Posterior vena cava (tissue), 2 donors: ENCODE measurements at regions of chr9 and their contacts with region 1.

Region 1: DNA sequence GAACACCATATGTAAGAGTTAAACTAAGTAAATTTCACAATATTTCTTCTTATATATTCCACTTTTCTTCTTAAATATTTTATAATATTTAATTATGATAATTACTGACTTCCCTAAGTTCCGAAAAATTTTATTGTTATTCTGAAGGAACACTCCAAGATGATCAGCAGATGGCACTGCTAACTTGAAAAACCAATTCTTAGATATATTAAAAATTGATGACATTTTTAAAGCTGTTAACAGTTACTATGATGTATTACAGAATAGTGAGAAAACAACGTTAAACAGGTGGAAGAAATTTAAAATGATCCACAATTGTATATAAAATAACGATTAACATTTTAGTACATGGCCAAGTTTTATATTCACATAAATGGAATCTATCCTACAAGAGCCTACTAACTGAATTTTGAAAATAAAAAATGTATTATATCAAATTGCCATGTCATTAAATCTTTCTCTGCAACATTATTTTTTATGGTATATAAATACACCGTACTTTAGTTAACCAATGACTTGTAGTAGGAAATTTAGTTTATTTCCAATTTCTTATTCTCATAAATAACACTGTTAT is 30.1 kb upstream of the MUSK start:
- DNase-seq: no peak

Region 2: DNA sequence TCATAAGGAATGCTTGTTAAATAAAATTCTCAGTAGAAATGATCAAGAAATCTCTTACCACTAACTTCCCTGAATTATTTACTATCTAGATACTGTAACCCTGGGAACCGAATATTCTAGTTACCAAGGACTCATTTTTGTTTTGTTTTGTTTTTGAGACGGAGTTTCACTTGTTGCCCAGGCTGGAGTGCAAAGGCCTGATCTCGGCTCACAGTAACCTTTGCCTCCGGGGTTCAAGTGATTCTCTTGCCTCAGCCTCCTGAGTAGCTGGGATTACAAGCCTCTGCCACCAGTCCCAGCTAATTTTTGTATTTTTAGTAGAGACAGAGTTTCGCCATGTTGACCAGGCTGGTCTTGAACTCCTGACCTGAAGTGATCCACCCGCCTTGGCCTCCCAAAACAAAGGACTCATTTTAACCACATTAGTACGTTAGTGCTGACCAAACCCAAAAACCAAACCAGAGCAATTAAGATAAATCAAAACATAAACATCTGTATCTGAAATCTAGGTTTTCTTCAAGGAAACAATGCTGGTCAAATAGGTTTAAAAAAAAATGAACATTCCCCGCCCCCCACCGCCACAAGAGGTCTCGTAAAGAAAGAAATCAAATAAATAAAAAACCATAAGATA is 385.8 kb before region 1 on chr9:
- intact Hi-C with region 1: no loop called
- DNase-seq: no peak

Region 3: GRCh38 chr9:110606104-110606790 is 32.2 kb before region 1 on chr9:
- intact Hi-C with region 1: no loop called
- DNase-seq: no peak

Region 4: GRCh38 chr9:110623462-110624025 is 14.9 kb before region 1 on chr9:
- intact Hi-C with region 1: no loop called
- DNase-seq: no peak

Region 5: GRCh38 chr9:111037381-111038305 is 399.2 kb after region 1 on chr9:
- intact Hi-C with region 1: loop called in 1 of 2 experiments (anchors 10 kb)
- DNase-seq: peak; percentile 80

Region 6: GRCh38 chr9:111056538-111056937 is 418.1 kb after region 1 on chr9:
- intact Hi-C with region 1: no loop called
- DNase-seq: no peak

Region 7: DNA sequence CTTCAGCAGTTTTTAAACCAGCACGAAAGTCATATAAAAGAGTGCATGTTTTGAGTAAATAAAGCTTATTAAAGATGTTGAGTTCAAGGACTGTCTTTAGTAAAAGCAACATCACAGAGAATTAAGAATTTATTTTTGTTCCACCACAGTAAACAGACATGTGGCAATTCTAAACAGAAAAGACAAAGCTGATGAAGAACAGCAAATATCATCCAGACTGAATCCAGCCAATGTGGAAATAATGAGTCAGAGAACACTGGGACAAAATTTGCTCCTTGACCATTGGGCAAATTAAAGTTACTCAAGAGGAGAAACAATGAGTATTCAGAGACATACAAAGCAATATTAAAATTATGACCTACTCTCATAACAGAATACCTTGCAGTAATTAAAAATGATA is 662.7 kb after region 1 on chr9:
- intact Hi-C with region 1: loop called (anchors 5 to 10 kb)
- DNase-seq: no peak